WTC11 (cell line): ENCODE measurements at regions of chr17 and their contacts with region 1.

Region 1: GRCh38 chr17:44199553-44200477 is at the start of gene ATXN7L3:
- DNase-seq: peak; percentile 100
- ATAC-seq: peak; percentile 87
- H3K4me3 Mint-ChIP-seq: peak within 1 kb of the TSS; percentile 85
- H3K27ac Mint-ChIP-seq: peak within 1 kb of the TSS; percentile 98
- H3K4me1 Mint-ChIP-seq: peaks cover 24% of the 10 kb centered on the region
- H3K27me3 Mint-ChIP-seq: no peaks in the 10 kb centered on the region
- CTCF ChIP-seq: no peak
- total RNA-seq, gene ATXN7L3: 113 to 124 TPM (median 114 TPM) in 3 replicates

Region 2: GRCh38 chr17:44218344-44219107 is 18.7 kb after region 1 on chr17:
- CTCF ChIA-PET with region 1: interaction called, 17 read pairs
- POLR2A ChIA-PET with region 1: interaction called, 4 read pairs
- DNase-seq: peak; percentile 72
- ATAC-seq: peak; percentile 30
- H3K4me3 Mint-ChIP-seq: peak overlapping the region; percentile 82
- H3K27ac Mint-ChIP-seq: no peak overlapping the region
- H3K4me1 Mint-ChIP-seq: peaks cover 17% of the 10 kb centered on the region
- H3K27me3 Mint-ChIP-seq: no peaks in the 10 kb centered on the region
- CTCF ChIP-seq: peak; percentile 26; the same call in 1 of the 2 replicates

Region 3: GRCh38 chr17:44241106-44241624 is 41.4 kb after region 1 on chr17:
- CTCF ChIA-PET with region 1: no interaction called
- POLR2A ChIA-PET with region 1: interaction called, 13 read pairs
- DNase-seq: no peak
- ATAC-seq: no peak
- H3K4me3 Mint-ChIP-seq: no peak overlapping the region
- H3K27ac Mint-ChIP-seq: no peak overlapping the region
- H3K4me1 Mint-ChIP-seq: peaks cover 4% of the 10 kb centered on the region
- H3K27me3 Mint-ChIP-seq: peaks cover 5% of the 10 kb centered on the region; the same call in 1 of the 2 replicates
- CTCF ChIP-seq: no peak

Region 4: GRCh38 chr17:44314869-44315661 is 115.2 kb after region 1 on chr17:
- CTCF ChIA-PET with region 1: interaction called, 18 read pairs
- POLR2A ChIA-PET with region 1: no interaction called
- DNase-seq: peak; percentile 76
- ATAC-seq: peak; percentile 13
- H3K4me3 Mint-ChIP-seq: peak overlapping the region; percentile 79
- H3K27ac Mint-ChIP-seq: no peak overlapping the region
- H3K4me1 Mint-ChIP-seq: peaks cover 39% of the 10 kb centered on the region
- H3K27me3 Mint-ChIP-seq: peaks cover 37% of the 10 kb centered on the region
- CTCF ChIP-seq: no peak

Region 5: GRCh38 chr17:44324571-44325275 is 124.9 kb after region 1 on chr17 and contains the start of gene SLC25A39:
- CTCF ChIA-PET with region 1: interaction called, 10 read pairs
- POLR2A ChIA-PET with region 1: interaction called, 5 read pairs
- DNase-seq: peak; percentile 94
- ATAC-seq: peak; percentile 71
- H3K4me3 Mint-ChIP-seq: peak within 1 kb of the TSS; percentile 86
- H3K27ac Mint-ChIP-seq: peak within 1 kb of the TSS; percentile 76
- H3K4me1 Mint-ChIP-seq: peaks cover 13% of the 10 kb centered on the region
- H3K27me3 Mint-ChIP-seq: peaks cover 8% of the 10 kb centered on the region
- CTCF ChIP-seq: no peak
- total RNA-seq, gene SLC25A39: 254 to 271 TPM (median 268 TPM) in 3 replicates

Region 6: DNA sequence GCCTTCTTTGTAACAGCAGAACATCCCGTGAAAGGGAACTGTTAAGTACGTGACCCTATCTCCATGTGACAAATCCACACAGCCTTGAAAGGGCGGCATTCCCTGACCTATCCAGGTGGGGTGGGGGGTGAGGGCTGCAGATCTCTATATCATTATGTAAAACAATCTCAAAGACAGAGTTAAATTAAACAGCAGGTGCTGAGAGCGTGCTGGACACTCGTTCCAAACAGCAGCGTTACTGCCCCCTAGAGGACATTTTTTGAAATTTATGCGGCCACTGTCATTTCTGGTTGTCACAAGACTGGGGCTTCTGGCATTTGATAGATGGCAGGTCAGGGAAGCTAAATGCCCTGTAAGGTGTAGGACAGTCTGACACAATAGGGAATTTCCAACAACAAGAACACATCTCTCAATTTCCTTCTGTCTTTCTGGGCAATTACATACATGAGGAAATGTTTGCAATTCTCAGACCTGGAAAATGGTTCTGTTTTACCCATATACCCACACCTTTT is 131.5 kb after region 1 on chr17:
- CTCF ChIA-PET with region 1: interaction called, 12 read pairs
- POLR2A ChIA-PET with region 1: interaction called, 5 read pairs
- DNase-seq: peak; percentile 80
- ATAC-seq: peak; percentile 19
- H3K4me3 Mint-ChIP-seq: no peak overlapping the region
- H3K27ac Mint-ChIP-seq: no peak overlapping the region
- H3K4me1 Mint-ChIP-seq: peaks cover 17% of the 10 kb centered on the region
- H3K27me3 Mint-ChIP-seq: peaks cover 3% of the 10 kb centered on the region; the same call in 1 of the 2 replicates
- CTCF ChIP-seq: peak; percentile 76

Region 7: GRCh38 chr17:44363613-44364159 is 163.9 kb after region 1 on chr17 and contains the start of gene FAM171A2:
- CTCF ChIA-PET with region 1: interaction called, 11 read pairs
- POLR2A ChIA-PET with region 1: no interaction called
- DNase-seq: peak; percentile 79
- ATAC-seq: peak; percentile 76
- H3K4me3 Mint-ChIP-seq: peak within 1 kb of the TSS; percentile 74
- H3K27ac Mint-ChIP-seq: no peak within 1 kb of the TSS
- H3K4me1 Mint-ChIP-seq: peaks cover 22% of the 10 kb centered on the region
- H3K27me3 Mint-ChIP-seq: peaks cover 42% of the 10 kb centered on the region
- CTCF ChIP-seq: peak; percentile 79
- total RNA-seq, gene FAM171A2: 28.2 to 29.9 TPM (median 28.5 TPM) in 3 replicates